CD4-positive, alpha-beta T cell (primary cell): ENCODE measurements at regions of chr22 and their contacts with region 1.

Region 1: GRCh38 chr22:39003165-39003638 is 10.9 kb upstream of the APOBEC3C start:
- DNase-seq: peak; percentile 51 to 91 (median 64)
- ATAC-seq: peak; percentile 83
- H3K4me3 ChIP-seq: no peak overlapping the region
- H3K4me3 Mint-ChIP-seq: no peak overlapping the region
- H3K27ac ChIP-seq: no peak overlapping the region
- H3K27ac Mint-ChIP-seq: no peak overlapping the region
- H3K4me1 ChIP-seq: peaks cover 16% of the 10 kb centered on the region
- H3K4me1 Mint-ChIP-seq: peaks cover 9% of the 10 kb centered on the region
- H3K27me3 ChIP-seq: no peaks in the 10 kb centered on the region
- H3K27me3 Mint-ChIP-seq: no peaks in the 10 kb centered on the region
- CTCF ChIP-seq: peak; percentile 80

Region 2: GRCh38 chr22:38766076-38766777 is 237.0 kb before region 1 on chr22:
- CTCF ChIA-PET with region 1: interaction called, 6 read pairs
- POLR2A ChIA-PET with region 1: interaction called, 5 read pairs
- intact Hi-C with region 1: loop called (anchors 5 kb)
- DNase-seq: peak in 13 of 14 experiments; percentile 22 to 75 (median 40)
- ATAC-seq: peak; percentile 65
- H3K4me3 ChIP-seq: no peak overlapping the region
- H3K4me3 Mint-ChIP-seq: no peak overlapping the region
- H3K27ac ChIP-seq: no peak overlapping the region
- H3K27ac Mint-ChIP-seq: no peak overlapping the region
- H3K4me1 ChIP-seq: peaks cover 22% of the 10 kb centered on the region
- H3K4me1 Mint-ChIP-seq: peaks cover 9% of the 10 kb centered on the region
- H3K27me3 ChIP-seq: no peaks in the 10 kb centered on the region
- H3K27me3 Mint-ChIP-seq: no peaks in the 10 kb centered on the region
- CTCF ChIP-seq: peak; percentile 69

Region 3: GRCh38 chr22:38927033-38927781 is 76.0 kb before region 1 on chr22:
- CTCF ChIA-PET with region 1: interaction called, 11 read pairs
- POLR2A ChIA-PET with region 1: no interaction called
- intact Hi-C with region 1: no loop called
- DNase-seq: peak in 13 of 14 experiments; percentile 7 to 69 (median 28)
- ATAC-seq: no peak
- H3K4me3 ChIP-seq: no peak overlapping the region
- H3K4me3 Mint-ChIP-seq: no peak overlapping the region
- H3K27ac ChIP-seq: no peak overlapping the region
- H3K27ac Mint-ChIP-seq: no peak overlapping the region
- H3K4me1 ChIP-seq: peaks cover 8% of the 10 kb centered on the region
- H3K4me1 Mint-ChIP-seq: peaks cover 5% of the 10 kb centered on the region
- H3K27me3 ChIP-seq: peaks cover 20 to 24% of the 10 kb centered on the region in 2 experiments
- H3K27me3 Mint-ChIP-seq: peaks cover 60% of the 10 kb centered on the region
- CTCF ChIP-seq: peak; percentile 37

Region 4: GRCh38 chr22:39013942-39014722 is 10.9 kb after region 1 on chr22 and contains the start of gene APOBEC3C:
- CTCF ChIA-PET with region 1: interaction called, 10 read pairs
- POLR2A ChIA-PET with region 1: no interaction called
- intact Hi-C with region 1: no loop called
- DNase-seq: peak; percentile 42 to 89 (median 68)
- ATAC-seq: peak; percentile 84
- H3K4me3 ChIP-seq: peak within 1 kb of the TSS; percentile 75
- H3K4me3 Mint-ChIP-seq: peak within 1 kb of the TSS; percentile 88
- H3K27ac ChIP-seq: peak within 1 kb of the TSS; percentile 65 to 70
- H3K27ac Mint-ChIP-seq: peak within 1 kb of the TSS; percentile 84
- H3K4me1 ChIP-seq: peaks cover 45% of the 10 kb centered on the region
- H3K4me1 Mint-ChIP-seq: peaks cover 43% of the 10 kb centered on the region
- H3K27me3 ChIP-seq: no peaks in the 10 kb centered on the region
- H3K27me3 Mint-ChIP-seq: no peaks in the 10 kb centered on the region
- CTCF ChIP-seq: no peak
- total RNA-seq, gene APOBEC3C: 13.9 to 14.8 TPM

Region 5: DNA sequence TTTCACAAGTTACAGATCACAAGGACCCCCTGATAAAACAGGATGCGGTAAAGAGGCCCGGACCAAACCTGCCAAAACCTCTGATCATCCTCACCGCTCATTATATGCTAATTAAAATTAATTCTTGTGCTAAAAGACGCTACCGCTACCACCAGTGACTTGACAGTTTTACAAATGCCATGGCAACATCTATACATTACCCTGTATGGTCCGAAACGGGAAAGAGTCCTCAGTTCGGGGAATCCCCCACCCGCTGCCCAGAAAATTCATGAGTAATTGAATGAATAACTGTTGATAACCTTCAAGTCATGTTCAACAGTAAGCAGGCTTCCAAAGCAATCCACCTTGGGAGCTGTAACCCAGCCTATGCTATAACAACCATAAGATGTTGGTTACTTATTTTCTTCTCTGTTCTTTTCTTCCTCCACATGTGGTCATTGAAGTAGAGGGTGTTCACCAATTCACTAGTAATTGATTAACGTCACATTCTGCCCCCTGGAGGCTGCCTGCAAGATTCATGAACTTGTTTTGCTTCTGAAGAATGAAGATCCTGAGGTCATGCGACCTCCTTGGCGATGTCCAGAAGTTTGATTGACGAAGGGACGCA is 114.5 kb after region 1 on chr22:
- CTCF ChIA-PET with region 1: interaction called, 5 read pairs
- POLR2A ChIA-PET with region 1: interaction called, 4 read pairs
- intact Hi-C with region 1: loop called (anchors 1 kb)
- DNase-seq: peak; percentile 54 to 85 (median 67)
- ATAC-seq: peak; percentile 56
- H3K4me3 ChIP-seq: peak overlapping the region; percentile 9
- H3K4me3 Mint-ChIP-seq: peak overlapping the region; percentile 27
- H3K27ac ChIP-seq: peak overlapping the region; percentile 45 to 49
- H3K27ac Mint-ChIP-seq: peak overlapping the region; percentile 67
- H3K4me1 ChIP-seq: peaks cover 29% of the 10 kb centered on the region
- H3K4me1 Mint-ChIP-seq: peaks cover 21% of the 10 kb centered on the region
- H3K27me3 ChIP-seq: no peaks in the 10 kb centered on the region
- H3K27me3 Mint-ChIP-seq: no peaks in the 10 kb centered on the region
- CTCF ChIP-seq: peak; percentile 81

Region 6: DNA sequence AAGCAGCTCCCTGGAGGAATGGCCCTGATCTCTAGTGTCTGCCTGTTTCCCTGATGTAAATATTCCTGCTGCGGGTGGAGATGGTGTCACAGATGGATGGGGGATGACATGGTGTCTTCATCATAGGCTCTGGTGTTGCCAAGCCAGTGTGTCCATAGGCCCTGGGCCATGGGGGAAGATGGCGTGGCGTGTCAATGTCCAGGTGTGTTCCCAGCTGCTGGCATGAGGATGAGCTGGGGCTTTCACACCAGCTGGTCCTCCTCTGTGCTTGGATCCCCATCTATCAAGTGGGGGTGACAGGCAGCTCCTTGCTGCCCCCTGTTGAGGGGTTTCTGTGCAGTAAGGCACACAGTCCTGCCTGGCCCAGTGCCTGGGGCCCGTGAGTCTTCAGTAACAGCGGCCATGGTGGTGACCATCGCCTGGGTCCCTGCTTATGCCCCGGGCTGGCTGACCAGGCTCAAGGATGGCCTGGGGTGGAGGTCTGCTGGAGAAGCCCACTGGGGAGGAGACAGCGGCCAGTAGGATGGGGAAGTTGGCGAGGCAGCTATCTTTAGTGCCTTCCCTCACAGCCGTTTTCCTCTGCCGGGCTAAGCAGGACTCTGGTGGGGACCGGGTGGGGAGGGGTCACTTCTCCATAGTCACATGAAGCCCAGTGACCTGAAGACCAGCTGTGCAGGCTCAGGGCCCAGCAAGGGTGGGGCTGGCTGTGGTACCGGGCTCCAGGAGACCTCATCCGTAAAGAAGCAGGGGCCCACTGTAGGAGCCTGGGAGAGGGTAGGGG is 303.6 kb after region 1 on chr22:
- CTCF ChIA-PET with region 1: interaction called, 4 read pairs
- POLR2A ChIA-PET with region 1: no interaction called
- intact Hi-C with region 1: loop called in 1 of 2 experiments (anchors 2 kb)
- DNase-seq: peak in 13 of 14 experiments; percentile 29 to 77 (median 58)
- ATAC-seq: peak; percentile 50
- H3K4me3 ChIP-seq: no peak overlapping the region
- H3K4me3 Mint-ChIP-seq: no peak overlapping the region
- H3K27ac ChIP-seq: no peak overlapping the region
- H3K27ac Mint-ChIP-seq: no peak overlapping the region
- H3K4me1 ChIP-seq: peaks cover 27% of the 10 kb centered on the region
- H3K4me1 Mint-ChIP-seq: peaks cover 9% of the 10 kb centered on the region
- H3K27me3 ChIP-seq: no peaks in the 10 kb centered on the region
- H3K27me3 Mint-ChIP-seq: peaks cover 4% of the 10 kb centered on the region
- CTCF ChIP-seq: peak; percentile 56